Psoas muscle (tissue), 8 donors: ENCODE measurements at regions of chr2 and their contacts with region 1.

Region 1: DNA sequence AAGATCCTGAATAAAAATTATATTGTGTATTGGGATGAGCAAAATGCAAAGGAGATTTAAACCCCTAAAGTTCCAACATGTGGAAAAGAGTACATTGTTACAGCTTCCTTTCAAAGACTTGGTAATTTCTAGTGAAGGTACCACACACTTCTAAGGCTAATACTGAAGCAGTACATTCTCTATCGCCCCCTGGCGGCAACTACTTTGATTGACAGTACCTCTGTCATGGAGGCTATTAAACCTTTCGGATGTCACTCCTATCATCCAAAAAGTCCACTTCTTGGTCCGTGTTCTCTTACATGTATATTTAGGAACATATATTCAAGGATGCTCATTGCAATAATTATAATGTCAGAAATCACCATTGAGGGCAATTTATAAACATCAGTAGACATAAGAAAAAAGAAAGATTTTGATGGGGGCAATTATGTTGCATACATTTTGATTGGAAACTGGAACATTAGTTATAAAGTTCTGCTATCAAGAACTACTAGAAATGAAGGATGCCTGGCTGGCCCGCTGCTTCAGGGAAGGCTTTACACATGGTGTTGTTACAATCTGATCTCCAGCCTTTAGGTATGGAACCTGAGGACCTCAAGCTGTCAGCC is 601.6 kb downstream of the CPS1 start:
- DNase-seq: peak; percentile 62 to 76
- ATAC-seq: peak in 3 of 4 donors; percentile 64 to 85 (median 75)
- H3K4me3 ChIP-seq: no peak overlapping the region
- H3K27ac ChIP-seq: no peak overlapping the region
- H3K4me1 ChIP-seq: no peaks in the 10 kb centered on the region
- H3K27me3 ChIP-seq: no peaks in the 10 kb centered on the region
- CTCF ChIP-seq: peak; percentile 90

Region 2: GRCh38 chr2:210842896-210843295 is 315.1 kb before region 1 on chr2:
- intact Hi-C with region 1: no loop called
- DNase-seq: no peak
- ATAC-seq: no peak
- H3K4me3 ChIP-seq: no peak overlapping the region
- H3K27ac ChIP-seq: no peak overlapping the region
- H3K4me1 ChIP-seq: no peaks in the 10 kb centered on the region
- H3K27me3 ChIP-seq: no peaks in the 10 kb centered on the region
- CTCF ChIP-seq: no peak

Region 3: GRCh38 chr2:211055438-211055837 is 102.5 kb before region 1 on chr2:
- intact Hi-C with region 1: no loop called
- DNase-seq: no peak
- ATAC-seq: no peak
- H3K4me3 ChIP-seq: no peak overlapping the region
- H3K27ac ChIP-seq: no peak overlapping the region
- H3K4me1 ChIP-seq: no peaks in the 10 kb centered on the region
- H3K27me3 ChIP-seq: no peaks in the 10 kb centered on the region
- CTCF ChIP-seq: no peak

Region 4: DNA sequence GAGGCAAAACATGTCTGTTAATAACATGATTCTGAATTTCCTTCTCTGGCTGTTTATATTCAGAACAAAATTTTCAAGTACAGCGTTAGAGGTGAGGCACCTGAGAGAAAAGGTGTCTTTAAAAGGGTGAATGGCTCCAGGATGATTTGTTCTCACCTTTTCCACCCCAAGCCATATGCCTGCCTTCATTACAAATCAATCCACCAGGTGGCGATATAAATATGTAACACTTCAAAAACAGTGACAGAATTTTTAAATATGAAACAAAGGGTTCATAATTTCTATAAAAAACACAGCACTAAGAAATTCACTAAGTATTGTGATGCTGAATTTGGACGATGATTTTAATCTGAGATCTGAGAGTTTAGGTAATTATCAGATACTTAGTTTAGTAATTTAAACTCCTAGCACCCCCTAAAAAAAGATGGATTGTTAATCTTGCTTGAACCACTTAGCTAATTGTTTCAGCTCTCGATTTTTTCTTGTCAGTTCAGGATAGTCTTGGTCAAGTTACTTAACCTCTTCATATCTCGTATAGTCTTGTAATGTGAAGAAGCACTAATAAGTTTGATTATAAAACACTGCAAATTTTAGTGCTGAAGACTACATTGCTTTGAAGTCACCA is 72.8 kb before region 1 on chr2:
- intact Hi-C with region 1: loop called in 1 of 2 experiments (anchors 5 kb)
- DNase-seq: no peak
- ATAC-seq: no peak
- H3K4me3 ChIP-seq: no peak overlapping the region
- H3K27ac ChIP-seq: no peak overlapping the region
- H3K4me1 ChIP-seq: no peaks in the 10 kb centered on the region
- H3K27me3 ChIP-seq: no peaks in the 10 kb centered on the region
- CTCF ChIP-seq: peak; percentile 54